ENCODE measurements at regions of chr17 and their contacts with region 1.

Region 1: DNA sequence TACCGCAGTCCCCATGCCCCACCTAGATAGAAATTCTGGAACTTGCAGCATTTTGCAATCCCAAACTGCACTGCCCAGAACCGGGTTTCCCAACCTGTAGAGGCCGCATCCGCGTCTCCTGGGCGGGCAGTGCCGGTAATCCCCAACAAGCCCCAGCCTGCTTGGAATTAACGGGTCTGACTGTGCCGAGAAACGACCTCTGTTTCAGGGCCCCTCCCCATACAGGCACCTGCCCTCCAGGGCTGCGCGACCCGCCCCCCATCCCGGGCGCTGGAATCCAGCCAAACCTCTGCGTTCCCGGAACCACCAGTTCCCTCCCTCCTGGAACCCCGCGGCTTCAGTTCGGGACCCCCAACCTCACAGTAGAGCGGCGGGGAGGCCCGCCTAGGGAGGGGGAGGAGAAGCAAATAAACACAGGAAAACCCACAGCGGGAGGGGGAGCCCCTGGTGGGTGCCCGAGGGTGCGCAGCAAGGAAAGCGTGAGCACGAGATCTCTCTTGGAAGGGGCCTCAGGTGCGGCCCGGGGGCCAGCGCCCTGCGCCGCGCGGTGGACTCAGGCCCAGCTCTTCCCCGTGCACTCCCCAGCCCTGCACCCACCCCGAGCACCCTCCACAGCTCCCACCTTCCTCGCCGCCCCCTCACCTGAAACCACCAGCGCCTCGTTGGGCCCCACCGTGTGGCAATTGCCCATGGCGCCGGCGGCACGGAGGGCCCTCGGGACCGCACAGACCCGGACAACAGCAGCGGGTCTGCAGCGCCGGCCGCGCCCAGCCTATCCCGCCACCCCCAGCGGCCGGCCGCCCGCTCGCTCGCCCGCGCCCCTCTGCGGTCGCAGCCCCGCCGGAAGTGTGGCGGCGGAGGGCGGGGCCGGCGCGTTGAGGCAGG is at the start of gene FLOT2:
- DNase-seq: peak in 1 of 2 donors; percentile 87
- H3K4me3 ChIP-seq: peak within 1 kb of the TSS; percentile 63 to 87
- H3K27ac ChIP-seq: peak within 1 kb of the TSS; percentile 93 to 95
- H3K4me1 ChIP-seq: peaks cover 3 to 42% of the 10 kb centered on the region in 2 donors
- H3K27me3 ChIP-seq: no peaks in the 10 kb centered on the region
- CTCF ChIP-seq: peak; percentile 5 to 20 (median 16)
- total RNA-seq, gene FLOT2: 72.4 TPM

Region 2: GRCh38 chr17:28854457-28855350 is 42.4 kb before region 1 on chr17 and contains the start of gene ERAL1:
- intact Hi-C with region 1: loop called (anchors 2 kb)
- DNase-seq: peak; percentile 41 to 89
- H3K4me3 ChIP-seq: peak within 1 kb of the TSS; percentile 77 to 85
- H3K27ac ChIP-seq: peak within 1 kb of the TSS; percentile 78 to 79
- H3K4me1 ChIP-seq: peaks cover 6% of the 10 kb centered on the region in 2 donors
- H3K27me3 ChIP-seq: no peaks in the 10 kb centered on the region
- CTCF ChIP-seq: peak in 1 of 3 experiments; percentile 8
- total RNA-seq, gene ERAL1: 5.7 TPM

Measured in ascending aorta (tissue), 2 donors.